Left cardiac atrium (tissue), 4 donors: ENCODE measurements at regions of chr3 and their contacts with region 1.

Region 1: DNA sequence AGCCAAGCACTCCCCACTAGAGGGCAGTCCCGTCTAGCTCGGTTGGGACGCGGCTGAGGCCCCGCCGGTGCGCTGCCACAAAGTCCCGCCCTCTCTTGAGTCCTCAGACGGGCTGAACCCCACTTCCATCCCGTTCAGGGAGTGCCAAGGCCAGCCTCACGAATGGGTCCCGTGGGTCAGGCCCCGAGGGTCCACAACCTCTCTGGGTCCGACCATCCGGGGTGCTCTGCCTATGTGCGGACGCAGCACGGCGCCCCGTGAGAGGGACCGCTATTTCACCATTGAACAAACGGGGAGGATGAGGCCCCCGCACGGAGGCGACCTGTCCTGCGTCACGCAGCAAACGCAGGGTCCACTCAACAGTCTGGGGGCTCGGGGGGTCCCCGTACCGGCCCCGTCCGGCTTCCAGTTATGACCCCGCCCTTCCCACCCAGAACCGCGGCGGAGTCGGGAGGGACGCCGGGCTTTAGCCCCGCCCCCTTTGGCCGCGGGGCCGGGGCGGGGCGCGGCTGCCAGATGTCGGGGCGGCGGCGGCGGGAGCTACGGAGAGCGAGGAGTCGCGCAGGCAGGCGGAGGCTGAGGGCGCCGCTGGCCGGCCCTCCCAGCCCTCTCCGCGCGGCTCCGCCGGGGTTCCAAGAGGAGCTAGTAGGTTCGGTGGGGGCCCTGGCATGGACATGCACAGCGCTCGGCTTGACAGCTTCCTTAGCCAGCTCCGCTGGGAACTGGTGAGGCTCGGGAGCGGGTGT is at the start of gene INKA1:
- DNase-seq: peak; percentile 93
- ATAC-seq: peak; percentile 84 to 87
- total RNA-seq, gene INKA1: 2.6 to 3.8 TPM

Region 2: DNA sequence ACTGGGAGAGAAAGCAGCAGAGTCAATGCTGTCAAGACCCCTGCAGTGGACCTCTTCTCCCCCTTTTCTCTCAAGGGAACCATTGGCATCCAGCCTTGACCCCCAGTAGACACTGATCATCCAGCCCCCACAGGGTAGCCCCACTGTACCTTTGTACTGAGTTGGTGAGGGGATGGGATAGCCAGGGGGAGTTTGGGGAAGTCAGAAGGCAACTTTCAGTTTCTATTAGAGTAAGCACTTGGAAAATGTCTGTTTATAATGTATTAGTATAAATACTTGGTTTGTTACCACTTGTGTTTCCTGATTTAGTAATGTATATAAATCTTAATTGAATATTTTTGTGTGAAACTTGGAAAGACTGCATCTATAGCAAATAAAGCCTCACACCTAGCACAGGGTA is 307.9 kb before region 1 on chr3:
- intact Hi-C with region 1: no loop called
- DNase-seq: no peak
- ATAC-seq: no peak

Region 3: DNA sequence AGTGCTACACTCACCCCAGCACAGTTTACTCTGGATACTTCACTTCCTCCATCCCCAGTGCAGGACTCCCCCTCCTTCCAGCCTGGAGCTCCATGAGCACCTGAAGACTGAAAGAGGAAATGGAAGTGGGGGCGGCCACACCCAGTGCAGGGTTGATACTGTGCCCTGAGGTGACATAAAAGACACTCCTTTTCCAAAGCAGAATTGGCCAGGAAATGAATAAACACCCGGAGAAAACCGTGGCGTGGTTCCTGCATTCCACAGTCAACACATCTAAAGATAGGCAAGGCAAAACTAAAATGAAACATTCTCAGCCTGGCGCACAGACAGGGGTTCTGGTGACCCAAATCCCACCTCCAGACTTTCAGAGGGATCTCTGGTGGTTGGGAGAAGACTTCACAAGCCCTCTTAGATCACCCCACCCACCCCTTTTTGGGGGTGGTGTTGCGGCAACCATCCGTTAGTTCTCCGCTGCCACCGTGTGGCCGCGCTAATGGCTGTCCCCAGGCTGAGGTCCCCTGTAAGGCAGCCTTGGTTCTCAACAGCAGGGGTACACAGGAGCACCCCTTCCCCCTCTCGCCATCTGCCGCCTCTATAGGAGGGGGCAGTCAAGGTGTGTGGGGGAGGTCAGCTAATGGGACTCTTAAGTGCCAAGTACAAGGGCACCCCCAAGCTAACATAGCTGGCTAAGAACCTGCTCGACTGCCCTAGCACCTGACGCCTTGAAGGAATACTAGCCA is 103.3 kb after region 1 on chr3:
- intact Hi-C with region 1: loop called in 1 of 2 experiments (anchors 2 kb)
- DNase-seq: peak; percentile 65
- ATAC-seq: peak; percentile 36 to 60